Gastrocnemius medialis (tissue), 4 donors: ENCODE measurements at regions of chr7 and their contacts with region 1.

Region 1: DNA sequence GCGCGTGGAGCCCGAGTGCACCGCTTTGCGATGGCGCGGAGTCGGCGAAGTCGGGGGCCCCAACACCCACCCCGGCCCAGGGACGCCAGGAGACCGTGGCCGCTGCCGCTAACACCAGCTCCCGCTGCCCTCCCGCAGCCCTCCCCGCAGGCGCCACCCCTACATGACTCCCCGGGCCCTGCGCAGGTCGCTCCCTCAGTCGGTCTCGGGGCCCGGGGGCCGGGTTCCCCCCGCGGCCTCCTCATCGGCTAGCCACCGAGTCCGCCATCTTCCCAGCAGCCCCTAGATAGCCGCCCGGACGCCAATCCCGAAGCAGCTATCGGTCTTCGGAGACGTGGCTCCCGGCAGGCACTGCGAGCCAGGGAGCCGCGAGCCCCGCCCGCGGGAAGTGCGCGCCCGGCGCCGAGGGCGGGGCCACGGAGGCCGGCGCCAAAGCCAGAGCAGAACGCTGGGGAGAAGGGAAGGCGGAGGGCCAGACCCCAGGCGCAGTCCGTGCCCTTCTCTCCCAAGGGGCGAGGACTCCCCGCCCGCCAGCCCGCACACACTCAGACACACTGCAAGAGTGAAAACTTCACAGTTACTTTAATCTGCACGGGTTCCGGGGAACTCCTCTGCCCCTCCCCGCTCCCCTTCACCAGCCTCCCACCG is at the start of gene FASTK:
- DNase-seq: peak; percentile 87 to 90
- ATAC-seq: peak; percentile 77 to 85
- H3K4me3 ChIP-seq: peak within 1 kb of the TSS; percentile 96 to 99 (median 98)
- H3K27ac ChIP-seq: peak within 1 kb of the TSS; percentile 90 to 99 (median 94)
- H3K4me1 ChIP-seq: peaks cover 34 to 47% of the 10 kb centered on the region in 2 donors
- H3K27me3 ChIP-seq: no peaks in the 10 kb centered on the region
- CTCF ChIP-seq: no peak
- POLR2A ChIP-seq: peak; percentile 70 to 79
- total RNA-seq, gene FASTK: 108 to 181 (median 141) TPM

Region 2: DNA sequence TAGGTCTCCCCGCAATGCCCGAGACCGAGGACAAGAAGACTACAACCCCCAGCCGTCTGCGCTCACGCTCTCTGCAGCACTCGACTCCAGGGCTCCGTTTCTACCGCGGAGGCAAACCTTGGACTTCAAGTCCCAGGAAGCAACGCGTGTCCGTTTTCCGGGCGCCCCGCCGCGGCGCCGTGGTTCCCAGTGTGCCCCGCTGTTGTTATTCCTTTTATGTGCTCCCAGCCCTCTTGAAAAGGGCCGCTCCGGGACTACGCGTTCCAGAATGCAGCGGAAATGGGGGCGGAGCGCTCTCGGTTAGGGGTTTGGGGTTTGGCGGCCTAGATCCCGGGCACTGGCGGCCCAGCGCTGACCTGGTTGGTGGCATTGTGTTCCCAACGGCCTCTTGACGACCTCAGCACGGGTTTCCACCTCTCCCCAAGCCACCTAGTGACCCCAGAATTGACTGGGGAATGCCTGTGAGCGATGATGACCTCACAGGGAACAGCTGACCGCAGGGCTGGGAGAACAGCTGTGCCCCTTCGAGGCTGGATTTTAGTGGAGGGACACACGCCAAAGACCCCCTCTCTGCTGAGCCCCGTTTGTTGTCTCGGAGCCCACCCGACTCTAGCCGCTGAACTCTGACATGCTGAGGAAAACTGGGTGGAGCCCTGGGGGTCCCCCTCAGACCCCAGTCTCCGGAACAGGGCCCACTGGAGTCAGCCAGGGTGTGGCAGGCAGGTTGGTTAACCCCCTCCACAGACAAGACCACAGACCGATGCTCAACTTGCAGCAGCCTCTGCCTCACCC is 22.5 kb before region 1 on chr7:
- in situ Hi-C with region 1: no loop called
- intact Hi-C with region 1: loop called (anchors 1 kb)
- DNase-seq: peak; percentile 100
- ATAC-seq: peak; percentile 85 to 87
- H3K4me3 ChIP-seq: peak overlapping the region; percentile 71 to 92 (median 86)
- H3K27ac ChIP-seq: peak overlapping the region; percentile 93 to 99 (median 98)
- H3K4me1 ChIP-seq: peaks cover 22 to 44% of the 10 kb centered on the region in 2 donors
- H3K27me3 ChIP-seq: no peaks in the 10 kb centered on the region
- CTCF ChIP-seq: no peak
- POLR2A ChIP-seq: peak; percentile 84 to 99

Region 3: GRCh38 chr7:151185762-151186631 is 105.4 kb after region 1 on chr7:
- in situ Hi-C with region 1: no loop called
- intact Hi-C with region 1: loop called (anchors 5 kb)
- DNase-seq: peak in 1 of 2 donors; percentile 55
- ATAC-seq: peak; percentile 28 to 33
- H3K4me3 ChIP-seq: peak overlapping the region; percentile 57 to 62 (median 60)
- H3K27ac ChIP-seq: peak overlapping the region; percentile 91 to 100 (median 99)
- H3K4me1 ChIP-seq: peaks cover 32 to 41% of the 10 kb centered on the region in 2 donors
- H3K27me3 ChIP-seq: no peaks in the 10 kb centered on the region
- CTCF ChIP-seq: peak in 2 of 5 experiments; percentile 12 to 40
- POLR2A ChIP-seq: no peak

Region 4: DNA sequence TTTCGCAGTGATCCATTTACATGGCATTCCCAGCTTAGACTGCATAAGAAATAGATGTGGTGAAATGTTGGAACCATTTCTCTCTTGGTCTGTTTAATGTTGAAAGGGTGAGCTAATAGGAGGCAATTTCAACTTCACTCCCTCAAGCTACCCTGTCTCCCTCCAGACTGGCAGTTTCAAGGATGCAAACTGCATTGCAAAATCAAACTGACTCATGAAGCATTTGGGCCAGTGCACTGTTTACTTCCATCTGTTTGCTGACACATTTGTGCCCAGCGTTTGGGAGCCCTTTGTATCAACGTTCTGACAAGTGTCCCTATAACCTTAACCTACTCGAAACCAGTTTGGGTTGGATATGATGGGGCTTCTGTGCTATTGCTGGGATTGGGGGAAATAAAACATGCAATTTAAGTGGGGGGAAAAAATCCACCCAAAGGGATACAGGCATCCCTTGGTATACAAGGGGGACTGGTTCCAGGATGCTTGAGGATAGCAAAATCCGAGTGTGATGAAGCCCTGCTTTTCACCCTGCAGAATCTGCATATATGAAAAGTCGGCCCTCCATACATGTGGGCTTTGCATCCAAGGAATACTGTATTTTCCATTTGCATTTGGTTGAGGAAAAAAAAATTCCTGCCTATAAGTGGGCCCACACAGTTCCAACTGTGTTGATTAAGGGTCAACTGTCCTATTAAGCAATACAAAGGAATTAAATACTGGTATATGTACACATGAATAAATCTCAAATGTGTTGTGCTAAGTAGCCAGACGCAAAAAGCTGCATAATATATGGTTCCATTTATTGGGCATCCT is 423.5 kb after region 1 on chr7:
- in situ Hi-C with region 1: no loop called
- intact Hi-C with region 1: loop called (anchors 10 kb)
- DNase-seq: peak; percentile 78 to 80
- ATAC-seq: peak; percentile 89 to 93
- H3K4me3 ChIP-seq: no peak overlapping the region
- H3K27ac ChIP-seq: peak overlapping the region; percentile 77 to 98 (median 88)
- H3K4me1 ChIP-seq: peaks cover 84 to 89% of the 10 kb centered on the region in 2 donors
- H3K27me3 ChIP-seq: no peaks in the 10 kb centered on the region
- CTCF ChIP-seq: no peak
- POLR2A ChIP-seq: peak in 1 of 2 donors; percentile 59